HEK293T (cell line): ENCODE measurements at regions of chr10 and their contacts with region 1.

Region 1: DNA sequence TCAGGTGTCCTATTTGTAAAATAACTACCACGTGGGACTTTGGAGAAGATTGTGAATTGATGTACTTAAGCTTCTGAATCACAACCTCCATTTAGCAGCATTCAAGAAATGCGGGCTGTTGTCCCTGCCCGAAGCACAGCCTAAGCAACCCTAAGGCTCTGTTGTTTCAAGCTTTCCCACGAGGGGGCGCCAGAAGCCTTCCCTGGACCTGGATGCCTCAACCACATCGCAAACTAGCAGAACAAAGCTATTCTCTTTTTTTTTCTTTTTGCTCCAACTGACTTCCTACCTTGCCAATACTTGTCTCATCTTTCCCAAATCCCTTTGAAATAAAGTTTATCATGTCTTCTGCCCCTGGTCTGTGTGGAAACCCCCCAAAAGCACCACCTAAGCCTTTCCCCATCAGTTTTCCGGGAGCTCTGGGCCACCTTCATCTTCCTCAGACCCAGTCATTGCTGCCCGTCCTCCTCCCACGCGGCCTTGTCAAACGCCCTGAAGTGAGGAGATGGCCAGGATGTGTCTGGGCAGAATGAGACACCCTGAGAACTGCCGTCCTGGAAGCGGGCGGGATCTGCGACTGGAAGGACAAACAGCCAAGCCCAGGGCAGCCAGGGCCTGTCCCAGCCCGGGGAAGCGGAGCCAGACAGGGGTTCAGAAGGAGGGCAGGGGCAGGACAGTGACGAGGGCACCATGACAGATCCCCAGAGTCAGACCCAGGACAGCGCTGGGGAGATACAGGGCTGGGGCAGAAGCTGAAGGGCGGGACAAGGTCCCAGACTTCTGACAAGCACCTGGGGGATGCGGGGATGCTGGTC is 112.7 kb downstream of the SLIT1 start:
- DNase-seq: peak; percentile 88

Region 2: DNA sequence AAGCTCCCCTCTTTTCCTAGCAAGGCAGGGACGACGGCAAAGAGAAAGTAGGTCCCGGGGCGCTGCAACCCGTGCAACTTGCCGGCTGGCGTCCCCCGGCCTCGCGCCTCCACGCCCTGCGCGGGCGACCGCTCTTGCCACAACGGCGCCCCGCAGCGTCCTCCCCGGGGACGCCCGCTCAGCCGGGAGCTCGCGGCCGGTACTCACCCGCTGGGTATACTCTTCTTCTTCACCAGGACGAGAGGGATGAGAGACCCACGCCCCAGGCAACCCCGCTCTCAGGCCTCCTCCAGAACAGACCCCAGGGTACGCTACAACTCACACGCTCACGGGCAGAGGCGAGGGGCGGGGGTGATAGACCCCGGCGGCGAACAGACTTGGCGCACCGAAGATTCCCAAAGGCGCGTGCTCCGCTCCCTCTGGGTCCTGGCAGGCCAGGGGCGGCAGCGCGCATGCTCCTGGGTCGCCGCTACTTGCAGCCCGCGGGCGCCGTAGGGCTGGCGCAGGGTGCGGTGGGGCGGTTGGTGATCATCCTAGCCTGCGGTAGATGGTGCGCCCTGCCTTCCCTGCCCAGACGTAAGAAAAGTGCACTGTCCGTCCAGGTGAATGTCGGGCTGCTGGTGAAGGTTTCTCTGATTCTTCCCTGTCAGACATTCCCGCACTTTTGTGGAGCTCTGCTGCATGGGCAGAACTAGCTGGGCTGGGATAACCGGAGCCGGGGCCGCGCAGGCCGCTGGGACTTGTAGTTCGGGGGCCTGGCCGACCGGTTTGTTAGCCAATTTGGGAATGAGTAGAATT is 1165.4 kb before region 1 on chr10 and contains the start of gene CC2D2B:
- CTCF ChIA-PET with region 1: no interaction called
- POLR2A ChIA-PET with region 1: no interaction called
- DNase-seq: peak; percentile 93

Region 3: GRCh38 chr10:96880575-96880974 is 192.5 kb before region 1 on chr10:
- CTCF ChIA-PET with region 1: no interaction called
- POLR2A ChIA-PET with region 1: no interaction called
- DNase-seq: no peak

Region 4: GRCh38 chr10:97037365-97038361 is 35.4 kb before region 1 on chr10:
- CTCF ChIA-PET with region 1: interaction called, 19 read pairs
- POLR2A ChIA-PET with region 1: no interaction called
- DNase-seq: peak; percentile 90

Region 5: GRCh38 chr10:97059006-97059871 is 13.8 kb before region 1 on chr10:
- CTCF ChIA-PET with region 1: interaction called, 12 read pairs
- POLR2A ChIA-PET with region 1: no interaction called
- DNase-seq: peak; percentile 42

Region 6: GRCh38 chr10:97196223-97197029 is 123.4 kb after region 1 on chr10:
- CTCF ChIA-PET with region 1: interaction called, 20 read pairs
- POLR2A ChIA-PET with region 1: no interaction called
- DNase-seq: peak; percentile 86

Region 7: DNA sequence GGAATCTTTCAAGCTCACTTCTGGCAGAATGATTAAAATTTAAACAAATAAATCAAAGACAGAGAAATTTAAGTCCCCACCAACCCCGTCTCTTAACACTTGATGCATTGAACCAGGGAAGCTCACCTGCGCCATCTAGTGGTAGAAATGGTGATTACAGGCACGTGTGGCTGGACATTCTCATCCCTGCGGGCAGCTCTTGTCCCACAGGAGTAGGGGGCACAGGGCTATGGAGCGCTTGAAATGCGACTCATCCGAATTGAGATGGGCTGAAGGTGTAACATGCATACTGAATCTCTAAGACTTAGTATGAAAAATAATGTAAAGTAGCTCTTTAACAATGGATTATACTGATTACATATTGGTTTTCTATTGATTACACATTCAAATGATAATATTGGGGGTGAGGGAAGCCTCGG is 137.5 kb after region 1 on chr10:
- CTCF ChIA-PET with region 1: interaction called, 139 read pairs
- POLR2A ChIA-PET with region 1: interaction called, 3 read pairs
- DNase-seq: peak; percentile 88